B cell (primary cell): ENCODE measurements at regions of chr1 and their contacts with region 1.

Region 1: DNA sequence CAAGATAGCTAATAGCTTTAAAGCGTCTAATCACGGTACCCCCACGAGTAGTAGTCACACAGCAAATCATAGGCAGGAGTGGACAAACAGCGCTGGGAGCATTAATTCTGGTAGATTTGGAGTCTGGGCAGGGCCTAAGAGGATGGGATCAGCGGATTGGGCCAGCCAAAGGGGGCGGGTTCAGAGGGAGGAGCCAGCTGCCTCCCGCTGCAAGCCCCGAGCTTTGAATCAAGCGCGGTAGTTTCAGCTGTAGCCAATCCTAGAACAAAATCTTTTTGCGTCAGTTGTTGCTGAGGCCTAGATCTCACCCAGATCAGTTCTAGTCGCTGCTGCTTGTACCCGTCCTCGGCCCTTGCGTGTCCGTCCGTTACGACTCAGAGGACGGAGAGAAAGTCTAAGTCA is 576 bp upstream of the NASP start:
- DNase-seq: peak; percentile 98
- ATAC-seq: peak; percentile 75
- H3K4me3 ChIP-seq: peak overlapping the region; percentile 91 to 100 (median 97)
- H3K4me3 Mint-ChIP-seq: peak overlapping the region; percentile 99
- H3K27ac ChIP-seq: peak overlapping the region; percentile 80 to 82
- H3K27ac Mint-ChIP-seq: peak overlapping the region; percentile 97
- H3K4me1 ChIP-seq: peaks cover 40 to 49% of the 10 kb centered on the region in 2 donors
- H3K4me1 Mint-ChIP-seq: peaks cover 41% of the 10 kb centered on the region
- H3K27me3 ChIP-seq: no peaks in the 10 kb centered on the region
- H3K27me3 Mint-ChIP-seq: no peaks in the 10 kb centered on the region
- CTCF ChIP-seq: no peak

Region 2: GRCh38 chr1:44714944-44715571 is 868.2 kb before region 1 on chr1:
- CTCF ChIA-PET with region 1: no interaction called
- POLR2A ChIA-PET with region 1: no interaction called
- intact Hi-C with region 1: loop called (anchors 1 kb)
- DNase-seq: peak; percentile 87
- ATAC-seq: peak; percentile 82
- H3K4me3 ChIP-seq: no peak overlapping the region
- H3K4me3 Mint-ChIP-seq: peak overlapping the region; percentile 64
- H3K27ac ChIP-seq: peak overlapping the region in 1 of 2 donors; percentile 56
- H3K27ac Mint-ChIP-seq: peak overlapping the region; percentile 86
- H3K4me1 ChIP-seq: peaks cover 50 to 53% of the 10 kb centered on the region in 2 donors
- H3K4me1 Mint-ChIP-seq: peaks cover 63% of the 10 kb centered on the region
- H3K27me3 ChIP-seq: no peaks in the 10 kb centered on the region
- H3K27me3 Mint-ChIP-seq: no peaks in the 10 kb centered on the region
- CTCF ChIP-seq: peak; percentile 92

Region 3: DNA sequence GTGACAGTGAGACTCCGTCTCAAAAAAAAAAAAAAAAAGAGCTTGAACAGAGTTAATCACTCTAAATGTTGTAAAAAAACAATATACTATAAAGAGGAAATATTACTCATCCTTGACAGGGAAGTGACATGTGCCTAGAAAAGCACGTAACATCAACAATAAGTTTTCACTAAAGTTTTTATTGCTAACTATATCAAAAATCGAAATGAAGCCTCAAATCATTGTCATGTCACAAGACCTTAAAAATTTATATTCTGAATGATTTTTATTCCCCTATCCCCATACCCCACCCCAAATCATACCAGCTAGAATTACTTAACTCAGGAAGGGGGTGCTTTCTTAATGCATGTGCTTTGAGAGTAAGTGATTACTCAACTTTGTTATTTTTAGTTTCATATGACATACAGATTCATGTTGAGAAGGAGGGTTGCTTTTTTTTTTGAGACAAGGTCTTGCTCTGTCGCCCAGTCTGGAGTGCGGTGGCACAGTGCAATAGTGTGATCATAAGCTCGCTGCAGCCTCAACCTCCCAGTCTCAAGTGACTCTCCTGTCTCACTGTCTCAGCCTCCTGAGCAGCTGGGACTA is 189.5 kb before region 1 on chr1:
- CTCF ChIA-PET with region 1: no interaction called
- POLR2A ChIA-PET with region 1: no interaction called
- intact Hi-C with region 1: loop called (anchors 2 kb)
- DNase-seq: peak; percentile 82
- ATAC-seq: peak; percentile 82
- H3K4me3 ChIP-seq: peak overlapping the region in 4 of 5 experiments; percentile 1 to 52 (median 24)
- H3K4me3 Mint-ChIP-seq: peak overlapping the region; percentile 82
- H3K27ac ChIP-seq: peak overlapping the region; percentile 96 to 99
- H3K27ac Mint-ChIP-seq: peak overlapping the region; percentile 99
- H3K4me1 ChIP-seq: peaks cover 35 to 37% of the 10 kb centered on the region in 2 donors
- H3K4me1 Mint-ChIP-seq: peaks cover 44% of the 10 kb centered on the region
- H3K27me3 ChIP-seq: no peaks in the 10 kb centered on the region
- H3K27me3 Mint-ChIP-seq: no peaks in the 10 kb centered on the region
- CTCF ChIP-seq: no peak

Region 4: DNA sequence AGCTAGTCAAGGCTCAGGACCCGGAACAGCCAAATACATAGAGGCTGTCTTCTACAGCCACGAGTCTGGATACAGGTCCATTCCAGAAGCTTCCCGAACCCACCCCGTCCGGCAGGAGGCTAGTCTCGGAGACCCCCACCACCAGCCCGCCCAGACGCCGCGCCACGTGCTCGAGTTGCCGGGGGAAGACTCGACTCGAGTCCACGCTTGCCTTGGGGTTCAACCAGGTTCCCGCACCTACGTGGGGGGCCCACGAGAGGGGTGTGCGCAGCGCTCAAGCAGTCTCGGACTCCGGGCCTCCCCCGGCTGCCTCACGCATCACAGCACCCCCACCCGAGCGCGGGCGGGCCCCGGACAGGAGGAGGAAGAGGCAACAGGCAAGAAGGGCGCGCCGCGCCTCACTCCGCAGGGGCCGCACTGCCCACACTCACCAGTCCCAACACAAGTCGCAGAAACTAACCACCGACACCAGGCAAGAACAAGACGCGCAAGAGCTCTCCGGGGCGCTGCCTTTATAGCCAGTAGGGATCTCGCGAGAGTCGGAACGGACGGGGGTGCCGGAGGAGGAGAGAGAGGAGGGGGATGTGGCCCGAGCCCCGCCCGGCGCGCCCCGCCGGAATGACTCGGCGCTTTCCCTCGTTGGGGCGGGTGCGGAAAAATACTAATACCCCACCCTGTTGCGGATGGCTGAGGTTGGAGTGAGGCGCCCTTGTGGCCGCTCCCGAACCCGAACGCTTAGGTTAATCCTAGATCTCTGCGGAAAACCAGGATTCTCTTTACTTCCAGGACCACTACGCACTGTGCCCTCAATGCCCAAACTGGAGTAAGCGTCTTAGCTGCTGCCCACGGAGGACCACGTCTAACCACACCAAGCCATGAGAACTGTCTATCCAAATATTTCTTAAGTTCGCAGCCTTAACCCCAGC is 61.6 kb before region 1 on chr1 and contains the start of gene PRDX1:
- CTCF ChIA-PET with region 1: interaction called, 6 read pairs
- POLR2A ChIA-PET with region 1: interaction called, 31 read pairs
- intact Hi-C with region 1: loop called (anchors 1 kb)
- DNase-seq: peak; percentile 98
- ATAC-seq: peak; percentile 86
- H3K4me3 ChIP-seq: peak within 1 kb of the TSS; percentile 75 to 97 (median 82)
- H3K4me3 Mint-ChIP-seq: peak within 1 kb of the TSS; percentile 95
- H3K27ac ChIP-seq: peak within 1 kb of the TSS; percentile 80 to 82
- H3K27ac Mint-ChIP-seq: peak within 1 kb of the TSS; percentile 98
- H3K4me1 ChIP-seq: peaks cover 16 to 31% of the 10 kb centered on the region in 2 donors
- H3K4me1 Mint-ChIP-seq: peaks cover 34% of the 10 kb centered on the region
- H3K27me3 ChIP-seq: no peaks in the 10 kb centered on the region
- H3K27me3 Mint-ChIP-seq: no peaks in the 10 kb centered on the region
- CTCF ChIP-seq: no peak
- total RNA-seq, gene PRDX1: 96.5 and 104 TPM in 2 replicates

Region 5: GRCh38 chr1:45569962-45570581 is 13.2 kb before region 1 on chr1:
- CTCF ChIA-PET with region 1: interaction called, 57 read pairs
- POLR2A ChIA-PET with region 1: interaction called, 3 read pairs
- intact Hi-C with region 1: loop called (anchors 1 kb)
- DNase-seq: peak; percentile 85
- ATAC-seq: peak; percentile 97
- H3K4me3 ChIP-seq: no peak overlapping the region
- H3K4me3 Mint-ChIP-seq: no peak overlapping the region
- H3K27ac ChIP-seq: peak overlapping the region in 1 of 2 donors; percentile 0
- H3K27ac Mint-ChIP-seq: peak overlapping the region; percentile 56
- H3K4me1 ChIP-seq: no peaks in the 10 kb centered on the region
- H3K4me1 Mint-ChIP-seq: peaks cover 2% of the 10 kb centered on the region
- H3K27me3 ChIP-seq: no peaks in the 10 kb centered on the region
- H3K27me3 Mint-ChIP-seq: no peaks in the 10 kb centered on the region
- CTCF ChIP-seq: peak; percentile 99

Region 6: DNA sequence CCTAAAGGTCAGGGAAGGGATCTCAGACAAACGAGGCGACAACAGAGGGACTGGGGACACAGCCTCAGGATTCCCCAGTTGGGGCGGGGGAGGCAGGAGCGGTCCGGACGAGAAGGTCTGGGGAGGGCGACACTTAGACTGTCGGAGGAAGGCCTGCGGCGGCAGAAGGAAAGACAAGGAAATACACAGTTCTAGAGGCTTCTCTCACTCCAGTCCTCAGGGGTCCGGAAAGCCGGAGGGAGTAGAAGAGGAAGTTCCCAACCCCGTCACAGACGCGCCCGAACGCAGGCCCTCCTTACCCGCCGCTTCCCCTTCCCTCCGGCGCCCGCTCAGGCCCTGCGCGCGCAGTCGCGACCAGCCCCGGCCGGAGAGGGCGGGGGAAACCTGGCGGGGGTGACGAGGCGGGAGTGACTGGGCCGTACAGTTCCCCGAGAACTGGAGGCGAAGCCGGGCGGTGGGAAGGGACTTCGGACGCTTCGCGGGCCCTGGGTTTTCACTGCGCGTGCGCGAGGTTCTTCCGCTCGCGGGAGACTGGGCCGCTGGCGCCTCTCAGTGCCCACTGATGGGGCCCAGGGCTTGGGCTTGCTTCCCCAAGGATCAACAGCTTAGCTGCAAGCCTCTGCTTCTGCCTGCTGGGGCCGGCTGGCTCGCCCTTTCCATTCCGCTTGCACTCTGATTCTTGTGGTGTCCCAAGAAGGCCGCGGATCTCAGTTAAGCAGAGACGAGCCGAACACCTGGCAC is 167.2 kb after region 1 on chr1 and contains the start of gene IPP:
- CTCF ChIA-PET with region 1: no interaction called
- POLR2A ChIA-PET with region 1: no interaction called
- intact Hi-C with region 1: loop called (anchors 2 kb)
- DNase-seq: peak; percentile 96
- ATAC-seq: peak; percentile 94
- H3K4me3 ChIP-seq: peak within 1 kb of the TSS; percentile 70 to 82 (median 75)
- H3K4me3 Mint-ChIP-seq: peak within 1 kb of the TSS; percentile 99
- H3K27ac ChIP-seq: peak within 1 kb of the TSS; percentile 94 to 98
- H3K27ac Mint-ChIP-seq: peak within 1 kb of the TSS; percentile 100
- H3K4me1 ChIP-seq: peaks cover 8 to 18% of the 10 kb centered on the region in 2 donors
- H3K4me1 Mint-ChIP-seq: peaks cover 15% of the 10 kb centered on the region
- H3K27me3 ChIP-seq: no peaks in the 10 kb centered on the region
- H3K27me3 Mint-ChIP-seq: no peaks in the 10 kb centered on the region
- CTCF ChIP-seq: no peak
- total RNA-seq, gene IPP: 12.1 and 12.7 TPM in 2 replicates